ENCODE measurements at regions of chr4 and their contacts with region 1.

Region 1: DNA sequence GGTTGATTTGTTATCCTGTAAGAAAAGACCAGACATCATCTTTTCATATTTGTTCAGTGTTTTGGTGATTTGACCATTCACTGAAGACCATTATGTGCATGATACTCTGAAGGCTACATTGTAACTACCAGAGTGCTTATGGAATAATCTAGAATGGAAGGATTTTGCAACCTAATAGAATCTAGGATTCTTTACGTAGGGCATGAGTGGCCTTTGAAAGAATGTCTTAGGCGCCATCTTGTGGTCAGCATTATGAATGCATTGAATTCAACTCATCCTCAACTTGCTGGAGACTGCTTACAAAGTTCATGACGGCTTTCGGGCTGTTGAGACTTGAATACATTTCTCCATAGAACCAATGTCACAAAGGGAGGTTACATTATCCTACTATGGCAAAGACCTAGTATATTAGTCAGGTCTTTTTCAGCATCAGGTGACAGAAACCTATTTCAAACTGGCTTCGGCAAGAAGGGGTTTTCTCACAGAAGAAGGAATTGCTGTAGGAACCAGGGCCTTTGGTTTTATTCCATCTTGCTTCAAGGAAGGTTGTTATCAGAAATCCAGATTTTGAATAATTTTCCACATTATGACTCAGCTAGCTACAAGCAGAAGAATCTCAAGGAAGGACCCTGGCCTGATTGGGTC is 104.1 kb downstream of the GPAT3 start:
- DNase-seq: peak; percentile 63 to 83 (median 66)
- ATAC-seq: peak; percentile 90
- H3K4me3 ChIP-seq: no peak overlapping the region
- H3K27ac ChIP-seq: no peak overlapping the region
- H3K4me1 ChIP-seq: no peaks in the 10 kb centered on the region
- H3K27me3 ChIP-seq: no peaks in the 10 kb centered on the region
- CTCF ChIP-seq: peak; percentile 63 to 94 (median 74); a peak in 5 of 6 replicates
- EP300 ChIP-seq: peak; percentile 39; the same call in 1 of the 2 replicates
- POLR2A ChIP-seq: no peak
- RAD21 ChIP-seq: peak; percentile 96 to 98

Region 2: GRCh38 chr4:81715757-81716156 is 1924.2 kb before region 1 on chr4:
- CTCF ChIA-PET with region 1: no interaction called
- POLR2A ChIA-PET with region 1: no interaction called
- in situ Hi-C with region 1: no loop called
- intact Hi-C with region 1: no loop called
- DNase-seq: no peak
- ATAC-seq: no peak
- H3K4me3 ChIP-seq: no peak overlapping the region
- H3K27ac ChIP-seq: no peak overlapping the region
- H3K4me1 ChIP-seq: no peaks in the 10 kb centered on the region; a peak in 1 of 5 replicates
- H3K27me3 ChIP-seq: peaks cover 3 to 41% of the 10 kb centered on the region in 2 experiments; a peak in 3 of 5 replicates
- CTCF ChIP-seq: peak; percentile 14 to 36 (median 17); a peak in 2 of 6 replicates
- EP300 ChIP-seq: no peak
- POLR2A ChIP-seq: no peak
- RAD21 ChIP-seq: peak in 1 of 2 experiments; percentile 52; a peak in 2 of 4 replicates

Region 3: GRCh38 chr4:83284193-83285054 is 355.5 kb before region 1 on chr4 and contains the start of gene COQ2:
- CTCF ChIA-PET with region 1: no interaction called
- POLR2A ChIA-PET with region 1: no interaction called
- in situ Hi-C with region 1: no loop called
- intact Hi-C with region 1: loop called (anchors 2 kb)
- DNase-seq: peak; percentile 92 to 95 (median 94)
- ATAC-seq: peak; percentile 94
- H3K4me3 ChIP-seq: peak within 1 kb of the TSS; percentile 75
- H3K27ac ChIP-seq: peak within 1 kb of the TSS; percentile 88
- H3K4me1 ChIP-seq: peaks cover 5 to 15% of the 10 kb centered on the region in 2 experiments; a peak in 4 of 5 replicates
- H3K27me3 ChIP-seq: no peaks in the 10 kb centered on the region
- CTCF ChIP-seq: peak; percentile 23 to 45 (median 34); a peak in 4 of 6 replicates
- EP300 ChIP-seq: no peak
- POLR2A ChIP-seq: peak; percentile 85
- RAD21 ChIP-seq: peak; percentile 14 to 47; a peak in 2 of 4 replicates
- polyA plus RNA-seq, gene COQ2: 1.9 to 2.9 TPM

Region 4: DNA sequence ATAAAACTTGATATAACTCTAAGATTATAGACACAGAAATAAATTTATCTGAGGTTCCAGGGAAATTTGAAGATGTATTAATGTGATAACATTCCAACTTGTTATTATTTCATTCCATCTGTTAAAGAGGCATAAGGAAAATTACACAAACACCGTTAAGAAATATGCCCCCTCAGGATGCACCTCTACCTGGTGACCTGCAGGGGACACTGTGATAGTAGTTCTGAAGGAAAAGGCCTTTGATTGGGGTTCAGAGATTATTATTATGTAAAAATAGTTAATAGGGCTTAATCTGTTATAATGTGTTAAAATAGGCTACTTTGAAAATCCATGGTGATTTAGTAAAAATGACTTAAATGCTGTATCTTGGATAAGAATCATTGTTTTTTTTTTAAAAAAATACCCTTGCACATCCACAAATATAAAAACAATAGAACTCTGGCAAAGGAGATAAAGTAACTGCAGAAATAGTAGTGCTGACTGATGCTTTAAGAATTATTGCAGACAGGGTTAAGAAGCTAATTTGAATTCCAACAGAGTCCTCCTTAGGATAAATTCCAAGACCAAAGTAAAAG is 149.0 kb before region 1 on chr4:
- CTCF ChIA-PET with region 1: interaction called, 11 read pairs
- POLR2A ChIA-PET with region 1: no interaction called
- in situ Hi-C with region 1: no loop called
- intact Hi-C with region 1: loop called (anchors 2 kb)
- DNase-seq: peak; percentile 63 to 76 (median 70)
- ATAC-seq: peak; percentile 41; the same call in 1 of the 3 replicates
- H3K4me3 ChIP-seq: no peak overlapping the region
- H3K27ac ChIP-seq: no peak overlapping the region
- H3K4me1 ChIP-seq: peaks cover 18 to 23% of the 10 kb centered on the region in 2 experiments; a peak in 4 of 5 replicates
- H3K27me3 ChIP-seq: no peaks in the 10 kb centered on the region
- CTCF ChIP-seq: peak; percentile 68 to 88 (median 77)
- EP300 ChIP-seq: no peak
- POLR2A ChIP-seq: no peak
- RAD21 ChIP-seq: peak; percentile 48 to 66; a peak in 3 of 4 replicates

Region 5: GRCh38 chr4:83510442-83510841 is 129.5 kb before region 1 on chr4:
- CTCF ChIA-PET with region 1: interaction called, 20 read pairs
- POLR2A ChIA-PET with region 1: no interaction called
- in situ Hi-C with region 1: loop called (anchors 5 kb)
- intact Hi-C with region 1: loop called (anchors 1 kb)
- DNase-seq: no peak
- ATAC-seq: no peak
- H3K4me3 ChIP-seq: no peak overlapping the region
- H3K27ac ChIP-seq: no peak overlapping the region
- H3K4me1 ChIP-seq: no peaks in the 10 kb centered on the region
- H3K27me3 ChIP-seq: no peaks in the 10 kb centered on the region
- CTCF ChIP-seq: no peak
- EP300 ChIP-seq: no peak
- POLR2A ChIP-seq: no peak
- RAD21 ChIP-seq: no peak

Region 6: GRCh38 chr4:83771113-83771705 is 131.2 kb after region 1 on chr4:
- CTCF ChIA-PET with region 1: no interaction called
- POLR2A ChIA-PET with region 1: no interaction called
- in situ Hi-C with region 1: no loop called
- intact Hi-C with region 1: loop called (anchors 5 kb)
- DNase-seq: peak; percentile 25 to 50 (median 38)
- ATAC-seq: peak; percentile 91
- H3K4me3 ChIP-seq: no peak overlapping the region
- H3K27ac ChIP-seq: no peak overlapping the region
- H3K4me1 ChIP-seq: no peaks in the 10 kb centered on the region
- H3K27me3 ChIP-seq: no peaks in the 10 kb centered on the region
- CTCF ChIP-seq: peak; percentile 48 to 69 (median 68)
- EP300 ChIP-seq: no peak
- POLR2A ChIP-seq: no peak
- RAD21 ChIP-seq: peak; percentile 71 to 73

Region 7: DNA sequence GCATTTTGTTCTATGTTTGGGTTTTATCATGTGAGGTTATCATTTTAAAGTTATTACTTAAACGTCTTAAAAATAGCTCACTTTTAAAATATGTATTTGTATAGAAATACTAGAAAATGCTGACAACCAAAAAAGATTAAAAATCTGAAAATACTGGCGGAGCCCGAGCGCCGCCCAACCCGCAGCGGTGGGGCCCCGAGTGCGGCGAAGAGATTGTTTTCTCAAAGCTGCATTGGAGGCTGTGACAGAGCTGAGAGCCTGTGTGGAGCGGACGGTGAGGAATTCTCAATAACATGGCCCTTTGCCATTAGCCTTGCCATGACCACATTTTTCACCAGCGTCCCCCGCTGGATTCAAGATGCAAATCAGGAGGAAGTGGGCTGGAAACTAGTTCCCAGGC is 603.7 kb after region 1 on chr4:
- CTCF ChIA-PET with region 1: no interaction called
- POLR2A ChIA-PET with region 1: no interaction called
- in situ Hi-C with region 1: no loop called
- intact Hi-C with region 1: loop called (anchors 1 kb)
- DNase-seq: no peak
- ATAC-seq: no peak
- H3K4me3 ChIP-seq: no peak overlapping the region
- H3K27ac ChIP-seq: no peak overlapping the region
- H3K4me1 ChIP-seq: peaks cover 0 to 6% of the 10 kb centered on the region in 2 experiments; a peak in 2 of 5 replicates
- H3K27me3 ChIP-seq: no peaks in the 10 kb centered on the region
- CTCF ChIP-seq: no peak
- EP300 ChIP-seq: no peak
- POLR2A ChIP-seq: no peak
- RAD21 ChIP-seq: no peak

Region 8: DNA sequence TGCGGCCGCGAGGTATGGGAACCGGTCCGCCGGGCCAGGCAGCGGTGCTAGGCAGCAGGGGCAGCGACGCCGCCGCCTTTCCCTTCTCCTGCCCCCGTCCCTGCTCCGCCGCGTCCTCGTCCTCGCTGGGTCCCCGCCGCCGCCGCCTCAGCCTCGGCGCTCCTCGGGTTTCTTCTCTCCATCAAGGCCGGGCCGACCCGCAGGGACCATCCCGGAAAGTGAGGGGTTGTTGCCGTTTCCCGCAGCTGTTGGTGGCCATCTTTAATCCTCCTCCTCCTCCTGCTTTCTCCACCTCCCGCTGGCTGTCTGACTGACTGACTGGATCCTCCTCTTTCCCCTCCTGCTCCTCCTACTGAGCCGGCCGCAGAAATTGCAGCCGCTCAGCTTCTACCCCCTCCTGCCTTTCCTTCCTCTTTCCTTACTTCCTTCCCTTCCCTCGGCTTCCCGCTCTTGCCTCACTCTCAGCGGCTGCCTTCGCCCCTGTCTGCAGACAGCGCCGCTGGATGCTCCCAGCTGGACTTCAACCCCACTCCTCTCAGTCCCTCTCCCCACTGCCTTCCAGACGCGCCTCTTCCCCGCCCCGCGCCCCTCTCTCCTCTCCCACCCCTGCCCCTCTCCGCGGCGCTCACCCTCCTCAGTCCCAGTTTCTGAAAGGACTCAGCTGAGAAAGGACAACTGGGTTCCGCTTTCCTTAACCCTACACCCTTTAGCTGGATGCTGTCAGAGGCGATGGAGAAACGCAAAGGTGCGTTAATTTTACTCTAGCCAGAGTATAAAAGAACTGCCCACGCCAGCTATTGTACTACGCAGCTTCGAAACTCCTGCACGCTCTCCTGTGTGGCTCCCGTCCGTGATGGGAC is 1326.6 kb after region 1 on chr4 and contains the start of gene WDFY3:
- CTCF ChIA-PET with region 1: no interaction called
- POLR2A ChIA-PET with region 1: no interaction called
- in situ Hi-C with region 1: no loop called
- intact Hi-C with region 1: loop called (anchors 10 kb)
- DNase-seq: peak; percentile 58 to 83 (median 68)
- ATAC-seq: peak; percentile 92
- H3K4me3 ChIP-seq: peak within 1 kb of the TSS; percentile 63
- H3K27ac ChIP-seq: peak within 1 kb of the TSS; percentile 59
- H3K4me1 ChIP-seq: peaks cover 0 to 15% of the 10 kb centered on the region in 2 experiments; a peak in 3 of 5 replicates
- H3K27me3 ChIP-seq: no peaks in the 10 kb centered on the region
- CTCF ChIP-seq: no peak
- EP300 ChIP-seq: no peak
- POLR2A ChIP-seq: peak; percentile 64
- RAD21 ChIP-seq: no peak
- polyA plus RNA-seq, gene WDFY3: 0.58 to 0.95 TPM

Measured in K562 (cell line).